Panc1 (cell line): ENCODE measurements at regions of chr9 and their contacts with region 1.

Region 1: DNA sequence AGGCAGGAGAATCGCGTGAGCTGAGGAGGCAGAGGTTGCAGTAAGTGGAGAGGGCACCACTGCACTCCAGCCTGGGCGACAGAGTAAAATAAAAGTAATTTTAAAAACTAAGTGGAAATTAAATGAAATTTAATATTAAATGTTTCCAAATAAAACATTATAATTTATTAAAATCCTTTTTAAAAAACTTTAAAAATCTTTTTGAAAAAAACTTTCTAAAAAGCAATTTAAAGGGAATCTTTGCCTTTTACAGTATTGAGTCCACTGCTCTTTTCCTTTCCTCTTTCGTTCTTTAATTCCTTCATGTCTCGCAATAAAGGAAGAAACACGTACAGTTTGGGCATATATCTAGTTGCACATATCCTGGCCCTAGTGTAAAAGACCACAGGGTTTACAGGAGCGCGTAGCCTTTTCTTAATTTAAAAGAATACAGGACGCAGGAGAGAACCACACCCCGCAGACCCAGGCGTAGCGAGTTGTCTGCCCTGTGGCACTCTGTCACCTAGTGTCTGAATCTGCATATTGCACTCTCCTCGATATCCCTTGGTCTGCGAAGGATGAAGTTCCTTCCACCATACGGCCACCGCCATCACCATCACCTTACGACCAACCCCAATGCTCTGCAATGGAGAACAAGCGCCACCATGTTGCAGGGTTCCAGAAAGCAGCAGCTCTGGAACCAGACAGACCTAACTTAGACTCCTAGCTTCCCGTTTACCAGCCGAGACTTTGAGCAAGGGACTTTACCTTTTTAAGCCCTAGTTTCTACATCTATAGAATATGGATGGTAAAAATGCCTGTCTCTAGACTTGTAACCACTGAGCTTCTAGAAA is 77.6 kb upstream of the DMRT1 start:
- DNase-seq: peak; percentile 22
- ATAC-seq: peak; percentile 96
- H3K4me3 ChIP-seq: no peak overlapping the region
- H3K27ac ChIP-seq: no peak overlapping the region
- H3K4me1 ChIP-seq: no peaks in the 10 kb centered on the region
- H3K27me3 ChIP-seq: no peaks in the 10 kb centered on the region
- CTCF ChIP-seq: peak; percentile 79

Region 2: DNA sequence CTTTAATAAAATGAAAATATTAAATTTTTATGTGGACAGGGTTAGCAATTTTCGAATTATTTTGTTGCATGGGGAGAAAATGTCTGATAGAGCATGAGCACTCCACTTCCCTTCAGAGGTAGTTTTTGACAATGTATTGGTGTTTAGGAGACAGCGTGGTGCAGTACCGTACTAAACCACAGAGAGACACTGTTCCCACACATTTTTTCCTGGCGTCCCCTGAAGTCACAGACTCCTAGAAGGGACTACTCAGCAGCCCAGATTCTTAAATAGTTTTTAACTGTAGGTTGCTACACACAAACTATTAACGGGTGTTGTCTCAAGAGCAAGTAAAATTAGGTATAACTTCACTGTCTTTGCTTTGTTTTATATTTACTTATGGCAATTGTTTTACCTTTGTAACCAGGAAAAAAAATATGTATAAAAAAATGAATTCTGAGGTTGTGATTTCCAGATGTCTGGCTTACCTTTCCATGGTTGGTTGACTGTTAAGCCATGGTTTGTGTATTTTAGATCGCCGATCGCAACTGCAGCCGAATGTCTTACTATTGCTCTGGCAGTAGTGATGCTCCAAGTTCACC is 378.0 kb before region 1 on chr9:
- CTCF ChIA-PET with region 1: no interaction called
- POLR2A ChIA-PET with region 1: no interaction called
- in situ Hi-C with region 1: no loop called
- intact Hi-C with region 1: loop called (anchors 10 kb)
- DNase-seq: peak; percentile 15
- ATAC-seq: peak; percentile 85
- H3K4me3 ChIP-seq: no peak overlapping the region
- H3K27ac ChIP-seq: no peak overlapping the region
- H3K4me1 ChIP-seq: no peaks in the 10 kb centered on the region
- H3K27me3 ChIP-seq: no peaks in the 10 kb centered on the region
- CTCF ChIP-seq: peak; percentile 70

Region 3: GRCh38 chr9:613771-614347 is 150.0 kb before region 1 on chr9:
- CTCF ChIA-PET with region 1: no interaction called
- POLR2A ChIA-PET with region 1: no interaction called
- in situ Hi-C with region 1: no loop called
- intact Hi-C with region 1: loop called (anchors 5 kb)
- DNase-seq: peak; percentile 4
- ATAC-seq: peak; percentile 60; the same call in 1 of the 2 replicates
- H3K4me3 ChIP-seq: no peak overlapping the region
- H3K27ac ChIP-seq: no peak overlapping the region
- H3K4me1 ChIP-seq: no peaks in the 10 kb centered on the region
- H3K27me3 ChIP-seq: no peaks in the 10 kb centered on the region
- CTCF ChIP-seq: peak; percentile 59

Region 4: GRCh38 chr9:663541-663940 is 100.4 kb before region 1 on chr9:
- CTCF ChIA-PET with region 1: no interaction called
- POLR2A ChIA-PET with region 1: no interaction called
- in situ Hi-C with region 1: no loop called
- intact Hi-C with region 1: no loop called
- DNase-seq: no peak
- ATAC-seq: no peak
- H3K4me3 ChIP-seq: no peak overlapping the region
- H3K27ac ChIP-seq: no peak overlapping the region
- H3K4me1 ChIP-seq: no peaks in the 10 kb centered on the region
- H3K27me3 ChIP-seq: no peaks in the 10 kb centered on the region
- CTCF ChIP-seq: no peak